ENCODE measurements at regions of chr9 and their contacts with region 1.

Region 1: DNA sequence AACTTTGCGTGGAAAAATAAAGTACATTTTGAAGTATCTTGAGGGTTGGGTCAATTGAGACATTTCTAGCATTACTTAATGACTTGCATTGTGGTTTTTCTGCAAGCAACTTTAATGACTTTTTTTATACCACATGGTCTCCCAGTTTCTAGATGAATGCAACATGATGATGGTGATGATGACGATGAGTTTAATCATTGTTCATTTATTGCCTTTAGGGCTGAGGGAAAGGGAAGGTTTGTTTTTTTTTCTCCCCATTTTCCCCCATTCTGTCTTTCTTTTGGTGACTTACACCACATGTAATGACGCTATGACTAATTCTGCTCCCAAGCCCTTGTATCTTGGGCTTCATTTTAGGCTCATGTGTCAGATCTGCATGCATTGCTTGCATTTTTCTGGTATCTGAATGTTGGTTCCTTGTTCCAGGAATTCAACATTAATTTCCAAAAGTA is 57.7 kb upstream of the NXNL2 start:
- DNase-seq: no peak
- H3K4me3 Mint-ChIP-seq: no peak overlapping the region
- H3K27ac Mint-ChIP-seq: peak overlapping the region; percentile 4
- H3K4me1 Mint-ChIP-seq: peaks cover 19% of the 10 kb centered on the region
- H3K27me3 Mint-ChIP-seq: no peaks in the 10 kb centered on the region

Region 2: GRCh38 chr9:88049677-88050352 is 427.5 kb before region 1 on chr9:
- CTCF ChIA-PET with region 1: no interaction called
- POLR2A ChIA-PET with region 1: no interaction called
- intact Hi-C with region 1: loop called (anchors 2 kb)
- DNase-seq: no peak
- H3K4me3 Mint-ChIP-seq: no peak overlapping the region
- H3K27ac Mint-ChIP-seq: no peak overlapping the region
- H3K4me1 Mint-ChIP-seq: peaks cover 12% of the 10 kb centered on the region
- H3K27me3 Mint-ChIP-seq: peaks cover 20% of the 10 kb centered on the region

Region 3: GRCh38 chr9:88303721-88304451 is 173.4 kb before region 1 on chr9:
- CTCF ChIA-PET with region 1: no interaction called
- POLR2A ChIA-PET with region 1: no interaction called
- intact Hi-C with region 1: loop called (anchors 1 kb)
- DNase-seq: peak; percentile 80
- H3K4me3 Mint-ChIP-seq: peak overlapping the region; percentile 33
- H3K27ac Mint-ChIP-seq: no peak overlapping the region
- H3K4me1 Mint-ChIP-seq: peaks cover 21% of the 10 kb centered on the region
- H3K27me3 Mint-ChIP-seq: peaks cover 26% of the 10 kb centered on the region

Region 4: GRCh38 chr9:88433583-88434255 is 43.6 kb before region 1 on chr9:
- CTCF ChIA-PET with region 1: no interaction called
- POLR2A ChIA-PET with region 1: no interaction called
- intact Hi-C with region 1: loop called (anchors 2 kb)
- DNase-seq: no peak
- H3K4me3 Mint-ChIP-seq: no peak overlapping the region
- H3K27ac Mint-ChIP-seq: peak overlapping the region; percentile 65
- H3K4me1 Mint-ChIP-seq: peaks cover 27% of the 10 kb centered on the region
- H3K27me3 Mint-ChIP-seq: no peaks in the 10 kb centered on the region

Region 5: DNA sequence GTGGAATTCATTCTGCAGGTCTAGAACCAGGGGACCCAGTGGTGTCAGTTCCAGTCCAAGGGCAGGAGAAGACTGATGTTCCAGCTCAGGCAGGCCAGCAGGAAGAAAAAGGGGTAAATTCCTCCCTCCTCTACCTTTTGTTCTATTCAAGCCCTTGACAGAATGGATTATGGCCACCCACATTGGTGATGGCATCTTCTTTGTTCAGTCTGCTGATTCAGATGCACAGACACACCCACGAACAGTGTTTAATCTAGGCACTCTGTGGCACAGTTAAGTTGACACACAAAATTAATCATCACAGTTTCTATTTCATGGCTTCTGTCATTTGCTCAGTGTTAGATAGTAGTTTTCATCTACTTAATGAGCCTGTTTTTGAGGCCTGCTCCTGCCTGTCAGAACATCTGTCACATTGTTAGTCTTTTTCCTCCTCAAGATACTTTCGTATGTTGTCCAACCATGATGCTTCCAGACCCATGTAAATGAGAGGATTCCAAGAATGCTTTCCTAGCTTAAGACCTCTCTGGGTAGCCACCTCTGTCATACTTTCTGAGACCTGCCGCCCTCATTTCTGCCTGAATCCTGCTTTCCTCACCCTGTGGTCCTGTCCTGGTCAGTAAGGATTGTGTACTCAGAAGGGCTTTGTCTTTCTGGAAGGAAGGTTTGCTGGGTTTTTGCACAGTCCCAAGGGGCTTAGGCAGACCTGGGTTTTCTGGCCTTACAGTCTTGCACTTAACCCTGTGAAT is 16.6 kb before region 1 on chr9:
- CTCF ChIA-PET with region 1: interaction called, 3 read pairs
- POLR2A ChIA-PET with region 1: interaction called, 4 read pairs
- intact Hi-C with region 1: loop called (anchors 1 kb)
- DNase-seq: peak; percentile 49
- H3K4me3 Mint-ChIP-seq: no peak overlapping the region
- H3K27ac Mint-ChIP-seq: peak overlapping the region; percentile 23
- H3K4me1 Mint-ChIP-seq: peaks cover 15% of the 10 kb centered on the region
- H3K27me3 Mint-ChIP-seq: no peaks in the 10 kb centered on the region

Region 6: DNA sequence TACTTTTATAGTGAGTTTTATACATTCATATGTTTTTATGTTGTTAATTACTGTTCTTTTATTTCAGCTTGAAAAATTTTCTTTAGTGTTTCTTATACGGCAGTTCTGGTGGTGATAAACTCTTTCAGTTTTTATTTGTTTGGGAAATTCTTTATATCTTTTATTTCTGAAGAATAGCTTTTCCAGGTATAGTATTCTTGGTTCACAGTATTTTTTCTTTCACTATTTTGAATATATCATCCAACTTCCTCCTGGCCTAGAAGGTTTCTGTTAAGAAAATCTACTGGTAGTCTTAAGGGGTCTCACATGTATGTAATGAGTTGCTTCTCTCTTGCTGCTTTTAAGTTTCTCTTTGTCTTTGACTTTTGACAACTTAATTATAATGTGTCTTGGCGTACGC is 137.0 kb after region 1 on chr9:
- CTCF ChIA-PET with region 1: no interaction called
- POLR2A ChIA-PET with region 1: no interaction called
- intact Hi-C with region 1: no loop called
- DNase-seq: no peak
- H3K4me3 Mint-ChIP-seq: no peak overlapping the region
- H3K27ac Mint-ChIP-seq: no peak overlapping the region
- H3K4me1 Mint-ChIP-seq: no peaks in the 10 kb centered on the region
- H3K27me3 Mint-ChIP-seq: peaks cover 4% of the 10 kb centered on the region